ENCODE measurements at regions of chr17 and their contacts with region 1.

Region 1: DNA sequence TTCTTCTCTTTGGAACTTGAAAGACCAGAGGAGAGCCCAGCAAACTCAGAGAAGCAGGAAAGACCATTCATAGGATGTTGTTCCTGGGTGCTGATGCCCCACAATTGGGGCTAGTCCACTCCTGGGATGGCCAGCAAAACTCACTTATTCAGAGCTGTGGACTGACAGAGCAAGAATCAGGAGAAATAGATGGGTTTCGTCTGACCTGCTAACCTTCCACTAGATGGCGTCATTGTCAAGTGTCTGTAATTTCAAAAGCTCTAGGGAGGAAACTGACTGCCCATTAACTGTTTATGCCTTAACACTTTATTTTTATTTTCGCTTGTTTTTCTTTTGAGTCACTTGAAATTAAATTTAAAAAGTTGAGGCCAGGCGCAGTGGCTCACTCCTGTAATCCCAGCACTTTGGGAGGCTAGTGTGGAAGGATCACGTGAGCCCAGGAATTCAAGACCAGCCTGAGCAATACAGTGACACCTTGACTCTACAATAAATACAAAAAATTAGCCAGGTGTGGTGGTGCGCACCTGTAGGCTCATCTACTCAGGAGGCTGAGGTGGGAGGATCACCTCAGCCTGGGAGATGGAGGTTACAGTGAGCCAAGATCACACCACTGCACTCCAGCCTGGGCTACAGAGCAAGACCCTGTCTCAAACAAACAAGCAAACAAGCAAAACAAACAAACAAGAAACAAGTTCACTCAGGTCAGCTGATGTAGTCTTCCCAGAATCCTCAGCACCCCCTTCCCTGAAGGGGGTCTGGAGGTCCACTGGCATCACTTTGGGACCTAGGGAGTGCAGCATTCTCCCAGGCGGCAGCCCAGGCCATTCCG is 28.6 kb upstream of the MILR1 start:
- DNase-seq: peak in 4 of 5 donors; percentile 72 to 75 (median 73)
- H3K4me3 ChIP-seq: no peak overlapping the region
- H3K4me3 Mint-ChIP-seq: no peak overlapping the region
- H3K27ac ChIP-seq: no peak overlapping the region
- H3K27ac Mint-ChIP-seq: no peak overlapping the region
- H3K4me1 ChIP-seq: peaks cover 5% of the 10 kb centered on the region
- H3K4me1 Mint-ChIP-seq: peaks cover 0 to 3% (median 0%) of the 10 kb centered on the region in 4 donors
- H3K27me3 ChIP-seq: no peaks in the 10 kb centered on the region
- H3K27me3 Mint-ChIP-seq: peaks cover 0 to 1% of the 10 kb centered on the region in 2 donors

Region 2: GRCh38 chr17:64262417-64263260 is 157.7 kb before region 1 on chr17 and contains the start of gene TEX2:
- CTCF ChIA-PET with region 1: no interaction called
- POLR2A ChIA-PET with region 1: no interaction called
- intact Hi-C with region 1: no loop called
- DNase-seq: peak; percentile 70 to 86 (median 73)
- H3K4me3 ChIP-seq: peak within 1 kb of the TSS; percentile 76 to 79
- H3K4me3 Mint-ChIP-seq: peak within 1 kb of the TSS; percentile 91 to 98 (median 95)
- H3K27ac ChIP-seq: peak within 1 kb of the TSS; percentile 74
- H3K27ac Mint-ChIP-seq: peak within 1 kb of the TSS; percentile 93 to 98 (median 96)
- H3K4me1 ChIP-seq: peaks cover 33% of the 10 kb centered on the region
- H3K4me1 Mint-ChIP-seq: peaks cover 21 to 46% (median 34%) of the 10 kb centered on the region in 4 donors
- H3K27me3 ChIP-seq: no peaks in the 10 kb centered on the region
- H3K27me3 Mint-ChIP-seq: peaks cover 0 to 9% of the 10 kb centered on the region in 2 donors
- total RNA-seq, gene TEX2: 12.6 to 13.1 TPM

Region 3: DNA sequence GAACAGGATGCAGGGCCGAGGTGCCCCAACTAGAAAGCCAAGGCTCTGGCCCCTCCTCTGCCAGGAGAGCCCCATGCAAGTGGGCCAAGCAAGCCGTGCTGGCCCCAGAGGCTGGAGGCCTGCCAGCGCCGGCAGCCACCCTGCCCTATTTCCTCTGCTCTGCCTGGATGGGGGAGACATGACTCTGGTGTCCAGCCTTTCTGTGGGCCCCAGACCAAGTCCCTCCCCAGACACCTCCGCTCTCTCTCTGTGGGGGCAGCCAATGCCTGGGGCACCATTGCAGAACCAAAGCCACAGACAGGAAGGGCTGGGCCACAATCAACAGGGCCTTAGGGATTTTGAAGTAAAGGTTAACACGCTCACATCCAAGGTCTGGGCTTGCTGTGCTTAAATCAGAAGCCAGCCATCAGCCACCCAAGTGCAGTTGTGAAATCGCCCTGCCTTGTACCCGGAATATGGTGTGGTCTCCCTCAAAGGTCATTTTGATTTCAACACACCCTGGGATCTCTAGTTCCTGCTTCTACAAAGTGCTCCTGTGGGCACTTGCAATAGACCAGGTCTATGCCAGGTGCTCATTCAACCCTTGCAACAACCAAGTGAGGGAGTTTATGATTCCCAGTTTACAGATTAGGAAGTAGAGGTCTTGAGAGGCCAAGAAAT is 93.8 kb before region 1 on chr17:
- CTCF ChIA-PET with region 1: interaction called, 257 read pairs
- POLR2A ChIA-PET with region 1: no interaction called
- intact Hi-C with region 1: loop called (anchors 1 kb)
- DNase-seq: no peak
- H3K4me3 ChIP-seq: no peak overlapping the region
- H3K4me3 Mint-ChIP-seq: no peak overlapping the region
- H3K27ac ChIP-seq: no peak overlapping the region
- H3K27ac Mint-ChIP-seq: peak overlapping the region in 1 of 7 donors; percentile 29
- H3K4me1 ChIP-seq: peaks cover 6% of the 10 kb centered on the region
- H3K4me1 Mint-ChIP-seq: peaks cover 0 to 4% (median under 1%) of the 10 kb centered on the region in 4 donors
- H3K27me3 ChIP-seq: no peaks in the 10 kb centered on the region
- H3K27me3 Mint-ChIP-seq: no peaks in the 10 kb centered on the region

Region 4: DNA sequence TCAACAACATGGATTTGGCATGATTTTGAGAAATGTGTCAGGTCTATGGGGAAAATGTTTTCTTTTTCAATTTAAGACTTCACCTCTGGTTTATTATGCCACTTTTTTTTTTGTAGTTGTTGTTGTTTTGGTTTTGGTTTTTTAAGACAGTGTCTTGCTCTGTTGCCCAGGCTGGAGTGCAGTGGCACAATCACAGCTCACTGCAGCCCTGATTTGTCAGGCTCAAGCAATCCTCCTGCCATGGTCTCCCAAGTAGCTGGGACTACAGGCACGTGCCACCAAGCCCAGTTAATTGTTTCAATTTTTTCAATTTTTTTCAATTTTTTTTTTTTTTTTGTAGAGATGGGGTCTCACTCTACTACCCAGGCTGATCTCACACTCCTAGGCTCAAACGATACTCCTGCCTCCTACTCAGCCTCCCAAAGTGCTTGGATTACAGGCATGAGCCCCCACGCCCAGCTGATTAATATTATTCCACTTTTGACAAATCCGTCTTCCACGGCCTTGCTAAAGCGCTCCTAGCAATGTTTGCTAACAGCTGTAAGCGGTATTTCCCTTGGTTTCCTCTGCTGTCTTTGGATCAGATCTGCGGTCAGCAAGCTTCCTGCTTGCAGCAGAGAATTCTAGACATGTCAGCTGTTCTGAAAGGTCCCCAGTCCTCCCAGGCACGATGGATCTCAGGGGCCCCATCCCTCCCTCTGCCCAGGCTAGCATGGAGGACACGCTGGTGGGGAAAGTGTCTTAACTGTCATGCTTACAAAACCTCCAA is 21.6 kb after region 1 on chr17:
- CTCF ChIA-PET with region 1: interaction called, 15 read pairs
- POLR2A ChIA-PET with region 1: interaction called, 3 read pairs
- intact Hi-C with region 1: no loop called
- DNase-seq: peak; percentile 31 to 66 (median 39)
- H3K4me3 ChIP-seq: peak overlapping the region in 1 of 2 donors; percentile 39
- H3K4me3 Mint-ChIP-seq: peak overlapping the region; percentile 72 to 92 (median 84)
- H3K27ac ChIP-seq: peak overlapping the region; percentile 28
- H3K27ac Mint-ChIP-seq: peak overlapping the region; percentile 76 to 95 (median 92)
- H3K4me1 ChIP-seq: peaks cover 26% of the 10 kb centered on the region
- H3K4me1 Mint-ChIP-seq: peaks cover 13 to 34% (median 26%) of the 10 kb centered on the region in 4 donors
- H3K27me3 ChIP-seq: no peaks in the 10 kb centered on the region
- H3K27me3 Mint-ChIP-seq: no peaks in the 10 kb centered on the region

Region 5: GRCh38 chr17:64496786-64497564 is 76.6 kb after region 1 on chr17 and contains the start of gene POLG2:
- CTCF ChIA-PET with region 1: interaction called, 287 read pairs
- POLR2A ChIA-PET with region 1: interaction called, 19 read pairs
- intact Hi-C with region 1: no loop called
- DNase-seq: peak; percentile 95 to 96 (median 95)
- H3K4me3 ChIP-seq: peak within 1 kb of the TSS; percentile 90 to 93
- H3K4me3 Mint-ChIP-seq: peak within 1 kb of the TSS; percentile 100
- H3K27ac ChIP-seq: peak within 1 kb of the TSS; percentile 79
- H3K27ac Mint-ChIP-seq: peak within 1 kb of the TSS; percentile 98 to 100 (median 99)
- H3K4me1 ChIP-seq: peaks cover 80% of the 10 kb centered on the region
- H3K4me1 Mint-ChIP-seq: peaks cover 50 to 91% (median 67%) of the 10 kb centered on the region in 4 donors
- H3K27me3 ChIP-seq: no peaks in the 10 kb centered on the region
- H3K27me3 Mint-ChIP-seq: no peaks in the 10 kb centered on the region
- total RNA-seq, gene POLG2: 57.4 to 60.0 TPM

Region 6: GRCh38 chr17:64599187-64599676 is 178.9 kb after region 1 on chr17:
- CTCF ChIA-PET with region 1: interaction called, 6 read pairs
- POLR2A ChIA-PET with region 1: no interaction called
- intact Hi-C with region 1: loop called (anchors 2 kb)
- DNase-seq: peak; percentile 40 to 77 (median 51)
- H3K4me3 ChIP-seq: no peak overlapping the region
- H3K4me3 Mint-ChIP-seq: peak overlapping the region; percentile 43 to 86 (median 76)
- H3K27ac ChIP-seq: peak overlapping the region; percentile 28
- H3K27ac Mint-ChIP-seq: peak overlapping the region; percentile 58 to 93 (median 87)
- H3K4me1 ChIP-seq: peaks cover 22% of the 10 kb centered on the region
- H3K4me1 Mint-ChIP-seq: peaks cover 18 to 39% (median 33%) of the 10 kb centered on the region in 4 donors
- H3K27me3 ChIP-seq: no peaks in the 10 kb centered on the region
- H3K27me3 Mint-ChIP-seq: no peaks in the 10 kb centered on the region

Region 7: DNA sequence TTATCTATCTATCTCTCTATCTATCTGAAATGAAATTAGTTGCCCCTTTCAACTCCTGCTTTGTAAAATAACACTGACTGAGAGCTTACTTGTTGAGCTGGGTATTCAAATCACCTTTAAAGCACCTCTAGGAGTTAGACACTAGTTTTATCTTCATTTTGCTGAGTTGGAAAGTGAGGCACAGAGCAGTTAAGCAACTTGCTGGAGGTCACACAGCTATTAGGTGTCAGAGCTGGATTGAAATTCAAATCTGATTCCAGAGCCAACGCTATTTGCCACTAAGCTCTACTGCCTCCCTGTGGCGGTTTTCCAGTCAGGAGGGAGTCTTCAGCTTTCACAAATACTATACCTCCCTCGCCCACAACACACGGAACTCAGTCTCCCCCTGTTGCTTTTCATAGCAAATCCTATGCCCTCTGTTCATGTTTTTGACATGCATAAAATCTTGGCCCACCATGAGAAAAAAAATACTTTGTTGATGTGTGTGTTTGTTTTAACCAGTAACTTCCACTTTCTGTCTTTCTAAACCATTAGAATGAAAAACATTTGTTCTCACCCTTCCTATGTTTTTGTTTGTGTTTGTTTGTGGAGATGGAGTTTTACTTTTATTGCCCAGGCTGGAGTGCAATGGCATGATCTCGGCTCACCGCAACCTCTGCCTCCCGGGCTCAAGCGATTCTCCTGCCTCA is 316.6 kb after region 1 on chr17:
- CTCF ChIA-PET with region 1: interaction called, 68 read pairs
- POLR2A ChIA-PET with region 1: no interaction called
- intact Hi-C with region 1: no loop called
- DNase-seq: peak; percentile 35 to 49 (median 45)
- H3K4me3 ChIP-seq: no peak overlapping the region
- H3K4me3 Mint-ChIP-seq: no peak overlapping the region
- H3K27ac ChIP-seq: no peak overlapping the region
- H3K27ac Mint-ChIP-seq: peak overlapping the region in 1 of 7 donors; percentile 10
- H3K4me1 ChIP-seq: no peaks in the 10 kb centered on the region
- H3K4me1 Mint-ChIP-seq: peaks cover 6 to 12% (median 8%) of the 10 kb centered on the region in 4 donors
- H3K27me3 ChIP-seq: no peaks in the 10 kb centered on the region
- H3K27me3 Mint-ChIP-seq: no peaks in the 10 kb centered on the region

Measured in CD4-positive, alpha-beta memory T cell (primary cell).